Naive thymus-derived CD4-positive, alpha-beta T cell (primary cell): ENCODE measurements at regions of chr20 and their contacts with region 1.

Region 1: DNA sequence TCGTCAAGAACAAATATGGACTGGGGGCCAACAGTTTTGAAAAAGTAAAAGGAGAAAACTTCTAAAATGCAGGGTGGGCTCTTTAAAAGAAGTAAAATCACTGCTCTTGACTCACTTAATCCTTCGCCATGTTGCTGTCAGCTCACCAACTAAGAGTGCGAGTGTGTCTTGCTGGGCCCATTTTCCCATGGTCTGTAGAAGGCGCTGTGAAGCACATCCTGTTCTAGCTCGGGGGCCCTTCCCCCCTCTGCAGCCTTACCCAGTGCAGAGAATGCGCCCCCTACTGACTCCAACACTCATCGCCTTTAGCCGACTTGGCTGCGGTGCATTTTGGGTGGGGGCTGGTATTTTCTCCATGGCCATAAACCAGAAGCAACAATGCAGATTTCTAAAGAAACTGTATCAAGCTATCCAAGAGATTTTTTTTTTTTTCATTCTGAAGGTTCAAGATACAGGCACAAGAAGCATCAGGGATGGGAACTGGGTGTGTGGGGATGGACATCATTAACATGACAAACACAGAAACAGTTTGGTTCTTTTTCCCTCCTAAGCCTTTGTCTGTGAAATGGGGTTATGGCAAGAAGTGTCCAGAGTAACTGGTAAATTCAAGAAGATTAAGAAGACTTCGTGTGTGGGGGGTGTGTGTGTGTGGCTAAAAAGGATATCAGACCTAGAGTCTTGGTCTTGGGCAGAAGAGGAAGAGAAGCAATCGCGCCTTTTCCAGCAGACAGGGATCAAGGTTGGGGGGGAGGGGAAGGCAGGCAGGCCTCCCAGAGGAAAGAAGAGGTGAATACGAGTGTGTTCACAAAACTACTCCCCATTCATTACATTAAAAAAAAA is 1.7 kb downstream of the ADNP start:
- DNase-seq: peak; percentile 74 to 95 (median 93)
- ATAC-seq: peak; percentile 84
- H3K4me3 ChIP-seq: peak overlapping the region; percentile 52
- H3K4me3 Mint-ChIP-seq: peak overlapping the region; percentile 88 to 98 (median 94)
- H3K27ac ChIP-seq: peak overlapping the region; percentile 63
- H3K27ac Mint-ChIP-seq: peak overlapping the region; percentile 85 to 99 (median 96)
- H3K4me1 ChIP-seq: peaks cover 37 to 38% of the 10 kb centered on the region in 2 donors
- H3K4me1 Mint-ChIP-seq: peaks cover 37 to 62% (median 57%) of the 10 kb centered on the region in 7 donors
- H3K27me3 ChIP-seq: no peaks in the 10 kb centered on the region
- H3K27me3 Mint-ChIP-seq: no peaks in the 10 kb centered on the region

Region 2: GRCh38 chr20:50815162-50815989 is 114.1 kb before region 1 on chr20:
- CTCF ChIA-PET with region 1: interaction called, 4 read pairs
- POLR2A ChIA-PET with region 1: interaction called, 33 read pairs
- intact Hi-C with region 1: loop called (anchors 1 kb)
- DNase-seq: peak in 1 of 9 donors; percentile 6
- ATAC-seq: peak; percentile 24
- H3K4me3 ChIP-seq: peak overlapping the region; percentile 25
- H3K4me3 Mint-ChIP-seq: peak overlapping the region; percentile 60 to 93 (median 80)
- H3K27ac ChIP-seq: peak overlapping the region; percentile 43
- H3K27ac Mint-ChIP-seq: peak overlapping the region; percentile 75 to 98 (median 87)
- H3K4me1 ChIP-seq: peaks cover 11 to 37% of the 10 kb centered on the region in 2 donors
- H3K4me1 Mint-ChIP-seq: peaks cover 34 to 70% (median 52%) of the 10 kb centered on the region in 7 donors
- H3K27me3 ChIP-seq: no peaks in the 10 kb centered on the region
- H3K27me3 Mint-ChIP-seq: no peaks in the 10 kb centered on the region

Region 3: GRCh38 chr20:50837532-50838506 is 91.7 kb before region 1 on chr20:
- CTCF ChIA-PET with region 1: no interaction called
- POLR2A ChIA-PET with region 1: no interaction called
- intact Hi-C with region 1: no loop called
- DNase-seq: no peak
- ATAC-seq: no peak
- H3K4me3 ChIP-seq: no peak overlapping the region
- H3K4me3 Mint-ChIP-seq: no peak overlapping the region
- H3K27ac ChIP-seq: no peak overlapping the region
- H3K27ac Mint-ChIP-seq: peak overlapping the region in 1 of 9 donors; percentile 16
- H3K4me1 ChIP-seq: no peaks in the 10 kb centered on the region
- H3K4me1 Mint-ChIP-seq: peaks cover 0 to 12% (median 0%) of the 10 kb centered on the region in 7 donors
- H3K27me3 ChIP-seq: no peaks in the 10 kb centered on the region
- H3K27me3 Mint-ChIP-seq: no peaks in the 10 kb centered on the region

Region 4: DNA sequence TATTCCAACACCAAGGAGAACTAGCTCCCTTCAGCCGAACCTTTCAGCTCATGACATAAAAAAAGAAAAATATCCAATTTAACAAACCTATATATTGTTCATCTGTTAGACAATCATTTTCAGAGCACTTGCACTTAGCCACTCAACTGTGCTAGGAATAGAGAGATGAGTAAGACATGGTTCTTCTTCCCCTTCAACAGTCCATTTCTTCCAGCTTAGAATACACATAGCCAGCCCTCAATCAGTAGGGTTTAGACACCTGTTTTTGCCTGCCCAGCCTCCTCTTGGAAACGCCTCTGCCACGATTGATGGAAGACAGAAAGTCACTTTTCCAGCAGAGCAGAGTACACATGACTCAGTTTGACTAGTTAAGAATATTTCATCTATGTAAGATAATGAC is 20.1 kb before region 1 on chr20:
- CTCF ChIA-PET with region 1: interaction called, 13 read pairs
- POLR2A ChIA-PET with region 1: interaction called, 7 read pairs
- intact Hi-C with region 1: no loop called
- DNase-seq: no peak
- ATAC-seq: no peak
- H3K4me3 ChIP-seq: no peak overlapping the region
- H3K4me3 Mint-ChIP-seq: peak overlapping the region in 2 of 10 donors; percentile 2
- H3K27ac ChIP-seq: no peak overlapping the region
- H3K27ac Mint-ChIP-seq: peak overlapping the region in 7 of 9 donors; percentile 4 to 74 (median 42)
- H3K4me1 ChIP-seq: peaks cover 16 to 22% of the 10 kb centered on the region in 2 donors
- H3K4me1 Mint-ChIP-seq: peaks cover 37 to 86% (median 73%) of the 10 kb centered on the region in 7 donors
- H3K27me3 ChIP-seq: no peaks in the 10 kb centered on the region
- H3K27me3 Mint-ChIP-seq: no peaks in the 10 kb centered on the region

Region 5: DNA sequence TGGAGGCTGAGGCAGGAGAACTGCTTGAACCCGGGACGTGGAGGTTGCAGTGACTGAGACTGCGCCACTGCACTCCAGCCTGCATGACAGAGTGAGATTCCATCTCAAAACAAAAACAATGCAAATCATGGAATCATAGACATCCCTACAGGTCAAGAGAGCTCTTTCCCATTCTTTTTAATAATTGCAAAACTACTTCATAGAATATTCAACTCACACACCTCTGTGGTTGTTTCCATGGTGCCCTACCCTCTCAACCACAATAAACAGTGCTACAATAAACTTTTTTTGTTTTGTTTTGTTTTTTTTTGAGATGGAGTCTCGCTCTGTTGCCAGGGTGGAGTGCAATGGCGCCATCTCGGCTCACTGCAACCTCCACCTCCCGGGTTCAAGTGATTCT is 13.6 kb after region 1 on chr20:
- CTCF ChIA-PET with region 1: no interaction called
- POLR2A ChIA-PET with region 1: interaction called, 19 read pairs
- intact Hi-C with region 1: no loop called
- DNase-seq: no peak
- ATAC-seq: peak; percentile 44
- H3K4me3 ChIP-seq: no peak overlapping the region
- H3K4me3 Mint-ChIP-seq: no peak overlapping the region
- H3K27ac ChIP-seq: no peak overlapping the region
- H3K27ac Mint-ChIP-seq: peak overlapping the region in 2 of 9 donors; percentile 12 to 33
- H3K4me1 ChIP-seq: no peaks in the 10 kb centered on the region
- H3K4me1 Mint-ChIP-seq: peaks cover 0 to 5% (median 0%) of the 10 kb centered on the region in 7 donors
- H3K27me3 ChIP-seq: no peaks in the 10 kb centered on the region
- H3K27me3 Mint-ChIP-seq: no peaks in the 10 kb centered on the region

Region 6: GRCh38 chr20:50953821-50954220 is 24.3 kb after region 1 on chr20:
- CTCF ChIA-PET with region 1: interaction called, 6 read pairs
- POLR2A ChIA-PET with region 1: interaction called, 95 read pairs
- intact Hi-C with region 1: loop called (anchors 1 kb)
- DNase-seq: no peak
- ATAC-seq: no peak
- H3K4me3 ChIP-seq: no peak overlapping the region
- H3K4me3 Mint-ChIP-seq: no peak overlapping the region
- H3K27ac ChIP-seq: no peak overlapping the region
- H3K27ac Mint-ChIP-seq: no peak overlapping the region
- H3K4me1 ChIP-seq: peaks cover 13 to 18% of the 10 kb centered on the region in 2 donors
- H3K4me1 Mint-ChIP-seq: peaks cover 27 to 62% (median 42%) of the 10 kb centered on the region in 7 donors
- H3K27me3 ChIP-seq: no peaks in the 10 kb centered on the region
- H3K27me3 Mint-ChIP-seq: peaks cover 0 to 2% (median 0%) of the 10 kb centered on the region in 5 donors

Region 7: DNA sequence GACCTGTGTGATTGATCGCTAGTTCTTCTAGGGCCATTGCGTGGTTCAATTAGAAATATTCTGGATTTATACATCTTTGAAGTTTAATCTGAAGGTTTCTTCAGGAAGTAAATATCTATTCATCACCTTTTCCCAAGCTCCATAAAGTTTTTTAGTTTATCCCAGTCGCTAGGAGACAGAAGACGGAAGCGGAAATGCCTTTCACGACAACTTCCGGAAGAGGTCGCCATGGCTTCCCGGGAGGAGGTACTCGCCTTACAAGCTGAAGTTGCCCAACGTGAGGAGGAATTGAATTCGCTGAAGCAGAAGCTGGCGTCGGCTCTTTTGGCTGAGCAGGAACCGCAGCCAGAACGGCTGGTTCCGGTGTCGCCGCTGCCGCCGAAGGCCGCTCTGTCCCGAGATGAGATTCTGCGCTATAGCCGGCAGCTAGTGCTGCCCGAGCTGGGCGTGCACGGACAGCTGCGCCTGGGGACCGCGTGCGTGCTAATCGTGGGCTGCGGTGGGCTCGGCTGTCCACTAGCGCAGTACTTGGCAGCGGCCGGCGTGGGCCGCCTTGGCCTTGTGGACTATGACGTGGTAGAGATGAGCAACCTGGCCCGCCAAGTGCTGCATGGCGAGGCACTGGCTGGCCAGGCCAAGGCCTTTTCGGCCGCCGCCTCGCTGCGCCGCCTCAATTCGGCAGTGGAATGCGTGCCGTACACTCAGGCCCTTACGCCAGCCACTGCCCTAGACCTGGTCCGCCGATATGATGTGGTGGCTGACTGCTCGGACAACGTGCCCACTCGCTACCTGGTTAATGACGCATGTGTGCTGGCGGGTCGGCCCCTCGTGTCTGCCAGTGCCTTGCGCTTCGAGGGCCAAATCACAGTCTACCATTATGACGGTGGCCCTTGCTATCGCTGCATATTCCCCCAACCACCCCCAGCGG is 29.4 kb after region 1 on chr20 and contains the start of gene MOCS3:
- CTCF ChIA-PET with region 1: interaction called, 6 read pairs
- POLR2A ChIA-PET with region 1: interaction called, 95 read pairs
- intact Hi-C with region 1: loop called (anchors 1 kb)
- DNase-seq: peak; percentile 57 to 95 (median 91)
- ATAC-seq: peak; percentile 86
- H3K4me3 ChIP-seq: peak within 1 kb of the TSS; percentile 93
- H3K4me3 Mint-ChIP-seq: peak within 1 kb of the TSS; percentile 92 to 99 (median 98)
- H3K27ac ChIP-seq: peak within 1 kb of the TSS; percentile 93
- H3K27ac Mint-ChIP-seq: peak within 1 kb of the TSS; percentile 97 to 100 (median 100)
- H3K4me1 ChIP-seq: peaks cover 22 to 25% of the 10 kb centered on the region in 2 donors
- H3K4me1 Mint-ChIP-seq: peaks cover 25 to 78% (median 66%) of the 10 kb centered on the region in 7 donors
- H3K27me3 ChIP-seq: no peaks in the 10 kb centered on the region
- H3K27me3 Mint-ChIP-seq: peaks cover 0 to 2% (median 0%) of the 10 kb centered on the region in 5 donors
- total RNA-seq, gene MOCS3: 2.5 to 8.9 (median 5.2) TPM